ENCODE measurements at regions of chr19 and their contacts with region 1.

Region 1: DNA sequence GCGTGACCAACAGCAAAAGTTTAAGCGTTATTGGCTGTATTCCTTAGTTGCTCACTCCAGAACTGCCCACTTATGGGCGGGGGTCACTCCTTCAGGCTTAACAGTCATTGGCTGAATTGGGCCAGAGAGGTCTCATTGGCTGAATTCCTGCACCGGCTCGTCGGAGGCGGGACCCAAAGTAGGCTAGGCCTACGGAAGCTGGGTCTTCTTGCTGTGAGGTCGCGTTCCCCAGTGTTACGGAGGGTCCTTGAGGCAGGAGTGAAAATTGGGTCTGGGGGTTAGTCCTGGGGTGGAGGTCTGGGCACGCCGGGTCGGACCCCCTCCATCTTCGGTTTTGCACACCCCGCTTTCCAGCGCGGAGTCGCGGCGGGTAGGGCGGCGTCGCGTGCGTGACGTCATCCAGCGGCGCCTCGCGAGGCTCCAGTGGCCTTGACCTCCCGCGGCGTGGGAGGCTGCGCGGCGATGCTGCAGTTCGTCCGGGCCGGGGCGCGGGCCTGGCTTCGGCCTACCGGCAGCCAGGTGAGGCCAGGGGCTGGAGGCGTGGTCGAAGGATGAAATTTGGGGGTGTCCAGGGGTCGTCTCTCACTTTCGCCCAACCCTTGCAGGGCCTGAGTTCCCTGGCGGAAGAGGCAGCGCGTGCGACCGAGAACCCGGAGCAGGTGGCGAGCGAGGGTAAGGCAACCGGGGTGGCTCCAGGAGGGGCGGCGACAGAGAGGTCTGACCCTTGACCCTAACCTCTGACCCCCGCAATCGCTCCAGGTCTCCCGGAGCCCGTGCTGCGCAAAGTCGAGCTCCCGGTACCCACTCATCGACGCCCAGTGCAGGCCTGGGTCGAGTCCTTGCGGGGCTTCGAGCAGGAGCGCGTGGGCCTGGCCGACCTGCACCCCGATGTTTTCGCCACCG is at the start of gene MRPL4:
- DNase-seq: peak; percentile 99
- ATAC-seq: peak; percentile 98
- H3K4me3 Mint-ChIP-seq: peak within 1 kb of the TSS; percentile 93
- H3K27ac Mint-ChIP-seq: peak within 1 kb of the TSS; percentile 95
- H3K4me1 Mint-ChIP-seq: peaks cover 23% of the 10 kb centered on the region
- H3K27me3 Mint-ChIP-seq: no peaks in the 10 kb centered on the region
- CTCF ChIP-seq: no peak
- total RNA-seq, gene MRPL4: 151 to 153 TPM

Region 2: GRCh38 chr19:10142701-10143375 is 109.2 kb before region 1 on chr19:
- CTCF ChIA-PET with region 1: interaction called, 11 read pairs
- POLR2A ChIA-PET with region 1: interaction called, 3 read pairs
- intact Hi-C with region 1: no loop called
- DNase-seq: peak; percentile 53
- ATAC-seq: peak; percentile 87
- H3K4me3 Mint-ChIP-seq: peak overlapping the region; percentile 31
- H3K27ac Mint-ChIP-seq: peak overlapping the region; percentile 86
- H3K4me1 Mint-ChIP-seq: peaks cover 34% of the 10 kb centered on the region
- H3K27me3 Mint-ChIP-seq: no peaks in the 10 kb centered on the region
- CTCF ChIP-seq: no peak

Region 3: DNA sequence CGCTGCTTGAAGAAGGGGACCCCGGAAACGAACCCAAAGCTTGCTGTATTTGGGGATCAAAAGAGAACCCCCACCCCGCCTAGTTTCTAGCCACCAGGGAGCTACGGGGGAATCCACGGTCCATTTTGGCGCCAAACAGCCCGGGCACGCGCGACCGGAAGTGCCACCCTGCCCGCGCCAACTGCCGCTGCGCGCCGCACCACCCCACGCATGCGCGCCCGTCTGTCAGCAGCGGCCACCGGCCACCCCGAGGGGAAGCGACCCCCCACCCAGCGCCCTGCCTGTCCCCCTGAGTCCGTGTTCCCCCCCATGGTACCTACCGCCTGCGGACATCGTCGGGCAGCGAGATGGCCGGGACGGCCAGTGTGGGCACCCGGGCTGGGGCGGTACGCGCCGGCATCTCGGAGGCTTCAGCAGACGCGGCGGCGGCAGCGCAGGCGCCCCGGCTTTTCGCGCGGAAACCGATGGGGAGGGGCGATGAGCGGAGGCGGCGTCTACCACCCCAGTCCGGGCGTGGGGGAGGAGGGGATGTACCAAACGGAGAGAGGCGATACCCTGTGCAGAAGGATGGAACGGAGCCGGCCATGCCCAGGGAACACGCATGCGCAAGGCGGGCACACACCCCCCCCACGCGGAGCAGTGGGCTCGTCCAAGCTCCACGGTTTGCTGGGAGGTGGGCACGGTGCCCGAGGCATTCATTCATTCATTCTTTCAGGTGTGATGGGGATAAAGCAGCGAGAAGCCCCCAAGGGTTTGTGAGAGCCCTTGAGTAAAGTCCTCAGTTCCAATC is 57.3 kb before region 1 on chr19 and contains the start of gene DNMT1:
- CTCF ChIA-PET with region 1: interaction called, 24 read pairs
- POLR2A ChIA-PET with region 1: interaction called, 5 read pairs
- intact Hi-C with region 1: loop called (anchors 5 kb)
- DNase-seq: peak; percentile 99
- ATAC-seq: peak; percentile 96
- H3K4me3 Mint-ChIP-seq: peak within 1 kb of the TSS; percentile 94
- H3K27ac Mint-ChIP-seq: peak within 1 kb of the TSS; percentile 97
- H3K4me1 Mint-ChIP-seq: peaks cover 42% of the 10 kb centered on the region
- H3K27me3 Mint-ChIP-seq: no peaks in the 10 kb centered on the region
- CTCF ChIP-seq: no peak
- total RNA-seq, gene DNMT1: 372 to 379 TPM

Region 4: GRCh38 chr19:10206226-10206885 is 45.7 kb before region 1 on chr19:
- CTCF ChIA-PET with region 1: interaction called, 18 read pairs
- POLR2A ChIA-PET with region 1: no interaction called
- intact Hi-C with region 1: no loop called
- DNase-seq: no peak
- ATAC-seq: no peak
- H3K4me3 Mint-ChIP-seq: no peak overlapping the region
- H3K27ac Mint-ChIP-seq: no peak overlapping the region
- H3K4me1 Mint-ChIP-seq: no peaks in the 10 kb centered on the region
- H3K27me3 Mint-ChIP-seq: no peaks in the 10 kb centered on the region
- CTCF ChIP-seq: no peak

Region 5: GRCh38 chr19:10230861-10231611 is 21.0 kb before region 1 on chr19 and contains the start of gene S1PR2:
- CTCF ChIA-PET with region 1: interaction called, 23 read pairs
- POLR2A ChIA-PET with region 1: interaction called, 7 read pairs
- intact Hi-C with region 1: no loop called
- DNase-seq: peak; percentile 80
- ATAC-seq: peak; percentile 55
- H3K4me3 Mint-ChIP-seq: peak within 1 kb of the TSS; percentile 82
- H3K27ac Mint-ChIP-seq: peak within 1 kb of the TSS; percentile 81
- H3K4me1 Mint-ChIP-seq: peaks cover 27% of the 10 kb centered on the region
- H3K27me3 Mint-ChIP-seq: no peaks in the 10 kb centered on the region
- CTCF ChIP-seq: no peak
- total RNA-seq, gene S1PR2: 6.3 to 6.6 TPM

Measured in activated CD8-positive, alpha-beta T cell treated with anti-CD3 and anti-CD28 coated beads for 36 hours (primary cell).